CD4-positive, alpha-beta memory T cell (primary cell): ENCODE measurements at regions of chr11 and their contacts with region 1.

Region 1: DNA sequence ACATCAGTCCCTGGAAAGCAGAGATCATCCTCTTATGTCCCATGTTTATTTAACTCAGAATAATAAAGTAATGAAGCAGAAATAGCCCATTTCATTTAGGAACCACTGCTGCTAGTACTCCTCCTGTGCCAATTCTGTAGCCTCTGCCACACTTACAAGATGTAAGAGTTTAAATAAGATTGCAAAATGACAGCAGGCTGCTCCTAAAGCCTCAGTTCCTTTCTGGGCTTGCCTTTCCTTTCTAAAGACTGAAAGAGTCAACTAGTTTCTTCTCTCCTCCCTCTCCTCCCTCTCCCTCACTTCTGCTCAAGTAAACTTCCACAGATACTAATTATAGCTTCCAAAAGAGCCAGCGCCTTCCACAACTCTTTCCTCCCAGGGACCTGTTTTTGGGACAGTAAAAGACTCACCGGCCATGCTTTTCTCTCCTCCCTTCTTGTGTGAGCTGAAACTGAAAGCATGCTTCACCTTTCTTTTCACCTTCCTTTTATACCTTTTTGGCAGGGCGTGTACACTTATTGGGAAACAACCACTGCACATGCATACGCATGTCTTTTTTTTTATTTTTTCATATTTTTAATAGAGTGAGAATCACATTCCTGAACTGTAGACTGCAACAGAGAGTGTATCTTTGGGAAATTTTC is 26.1 kb upstream of the CARD16 start:
- DNase-seq: peak; percentile 37 to 67 (median 57)
- H3K4me3 ChIP-seq: peak overlapping the region; percentile 55 to 79
- H3K4me3 Mint-ChIP-seq: peak overlapping the region; percentile 91 to 100 (median 96)
- H3K27ac ChIP-seq: peak overlapping the region; percentile 69
- H3K27ac Mint-ChIP-seq: peak overlapping the region; percentile 81 to 98 (median 95)
- H3K4me1 ChIP-seq: peaks cover 39% of the 10 kb centered on the region
- H3K4me1 Mint-ChIP-seq: peaks cover 29 to 44% (median 36%) of the 10 kb centered on the region in 4 donors
- H3K27me3 ChIP-seq: no peaks in the 10 kb centered on the region
- H3K27me3 Mint-ChIP-seq: peaks cover 0 to 1% of the 10 kb centered on the region in 2 donors

Region 2: GRCh38 chr11:105044921-105045524 is 26.2 kb before region 1 on chr11 and contains the start of gene CARD16:
- CTCF ChIA-PET with region 1: no interaction called
- POLR2A ChIA-PET with region 1: interaction called, 3 read pairs
- intact Hi-C with region 1: loop called (anchors 2 kb)
- DNase-seq: peak; percentile 45 to 58 (median 56)
- H3K4me3 ChIP-seq: peak within 1 kb of the TSS; percentile 60 to 87
- H3K4me3 Mint-ChIP-seq: peak within 1 kb of the TSS; percentile 94 to 99 (median 98)
- H3K27ac ChIP-seq: peak within 1 kb of the TSS; percentile 73
- H3K27ac Mint-ChIP-seq: peak within 1 kb of the TSS; percentile 77 to 100 (median 98)
- H3K4me1 ChIP-seq: peaks cover 40% of the 10 kb centered on the region
- H3K4me1 Mint-ChIP-seq: peaks cover 36 to 66% (median 42%) of the 10 kb centered on the region in 4 donors
- H3K27me3 ChIP-seq: no peaks in the 10 kb centered on the region
- H3K27me3 Mint-ChIP-seq: no peaks in the 10 kb centered on the region
- total RNA-seq, gene CARD16: 56.1 to 59.0 TPM

Region 3: DNA sequence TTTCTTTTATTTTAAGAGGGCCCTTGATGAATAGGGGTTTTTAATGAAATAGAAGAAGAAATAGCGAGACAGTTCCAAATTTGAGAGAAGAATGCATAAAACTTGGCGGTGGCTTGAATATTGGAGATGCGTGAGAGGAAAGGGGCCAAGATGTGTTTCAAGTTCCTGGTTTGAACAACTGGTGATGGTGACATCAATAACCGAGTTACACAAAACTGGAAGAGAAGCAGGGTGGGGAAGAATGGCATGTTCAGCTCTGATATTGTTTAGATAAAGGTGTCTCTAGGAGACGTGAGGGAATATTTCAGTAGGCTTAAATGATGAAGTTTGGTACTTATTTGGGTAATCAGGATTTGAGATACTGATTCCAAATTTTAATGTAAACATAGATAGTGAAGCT is 27.6 kb after region 1 on chr11:
- CTCF ChIA-PET with region 1: interaction called, 3 read pairs
- POLR2A ChIA-PET with region 1: interaction called, 4 read pairs
- intact Hi-C with region 1: loop called (anchors 1 kb)
- DNase-seq: no peak
- H3K4me3 ChIP-seq: no peak overlapping the region
- H3K4me3 Mint-ChIP-seq: peak overlapping the region; percentile 14 to 95 (median 64)
- H3K27ac ChIP-seq: peak overlapping the region; percentile 62
- H3K27ac Mint-ChIP-seq: peak overlapping the region in 4 of 7 donors; percentile 39 to 88 (median 81)
- H3K4me1 ChIP-seq: peaks cover 30% of the 10 kb centered on the region
- H3K4me1 Mint-ChIP-seq: peaks cover 26 to 32% (median 29%) of the 10 kb centered on the region in 4 donors
- H3K27me3 ChIP-seq: no peaks in the 10 kb centered on the region
- H3K27me3 Mint-ChIP-seq: no peaks in the 10 kb centered on the region